CD4-positive, alpha-beta memory T cell (primary cell): ENCODE measurements at regions of chr1 and their contacts with region 1.

Region 1: GRCh38 chr1:232635778-232636356 is 5.9 kb upstream of the SIPA1L2 start:
- DNase-seq: peak in 4 of 5 donors; percentile 39 to 44 (median 42)
- H3K4me3 ChIP-seq: no peak overlapping the region
- H3K4me3 Mint-ChIP-seq: no peak overlapping the region
- H3K27ac ChIP-seq: no peak overlapping the region
- H3K27ac Mint-ChIP-seq: no peak overlapping the region
- H3K4me1 ChIP-seq: peaks cover 3% of the 10 kb centered on the region
- H3K4me1 Mint-ChIP-seq: peaks cover 1 to 4% (median 2%) of the 10 kb centered on the region in 4 donors
- H3K27me3 ChIP-seq: no peaks in the 10 kb centered on the region
- H3K27me3 Mint-ChIP-seq: peaks cover 11 to 13% of the 10 kb centered on the region in 2 donors

Region 2: DNA sequence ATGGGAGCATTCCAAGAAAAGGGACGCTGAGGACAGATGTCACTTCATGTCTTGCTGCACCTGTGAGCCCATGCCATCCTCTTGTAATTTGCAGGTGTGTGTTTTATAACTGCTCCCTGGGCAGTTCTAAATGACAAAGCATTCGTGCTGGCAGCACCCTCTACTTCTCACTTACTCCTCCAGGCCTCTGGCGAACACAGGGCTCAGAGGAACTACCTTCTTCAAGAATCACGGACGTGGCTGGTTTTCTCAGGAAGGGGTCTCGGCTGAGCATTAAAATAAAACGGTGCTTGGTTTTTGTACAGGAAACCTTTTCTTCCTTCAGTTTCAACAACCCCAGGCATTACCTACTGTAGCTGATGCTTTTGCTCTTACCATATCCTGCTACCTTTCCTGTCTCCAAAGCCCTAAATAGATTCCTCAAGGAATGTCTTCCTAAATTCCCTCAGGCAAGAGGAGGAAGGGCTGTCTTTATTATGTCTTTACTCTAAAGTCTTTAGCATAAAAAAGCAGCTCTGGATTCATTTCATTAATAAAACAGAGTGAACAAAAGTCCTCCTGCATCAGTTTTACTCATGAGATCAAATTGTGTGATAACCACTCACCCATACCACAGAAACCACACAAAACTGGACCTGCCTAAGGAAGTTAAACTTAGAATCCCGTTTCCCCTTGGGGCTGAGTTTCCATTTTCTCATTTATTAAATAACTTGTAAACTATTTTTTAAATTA is 90.3 kb after region 1 on chr1:
- CTCF ChIA-PET with region 1: no interaction called
- POLR2A ChIA-PET with region 1: no interaction called
- intact Hi-C with region 1: no loop called
- DNase-seq: no peak
- H3K4me3 ChIP-seq: no peak overlapping the region
- H3K4me3 Mint-ChIP-seq: peak overlapping the region in 2 of 8 donors; percentile 45 to 55
- H3K27ac ChIP-seq: no peak overlapping the region
- H3K27ac Mint-ChIP-seq: no peak overlapping the region
- H3K4me1 ChIP-seq: no peaks in the 10 kb centered on the region
- H3K4me1 Mint-ChIP-seq: peaks cover 6 to 10% (median 9%) of the 10 kb centered on the region in 4 donors
- H3K27me3 ChIP-seq: no peaks in the 10 kb centered on the region
- H3K27me3 Mint-ChIP-seq: peaks cover 7% of the 10 kb centered on the region in 2 donors

Region 3: GRCh38 chr1:232793944-232794343 is 158.1 kb after region 1 on chr1:
- CTCF ChIA-PET with region 1: interaction called, 5 read pairs
- POLR2A ChIA-PET with region 1: no interaction called
- intact Hi-C with region 1: loop called (anchors 1 kb)
- DNase-seq: peak in 1 of 5 donors; percentile 22
- H3K4me3 ChIP-seq: no peak overlapping the region
- H3K4me3 Mint-ChIP-seq: peak overlapping the region in 1 of 8 donors; percentile 27
- H3K27ac ChIP-seq: no peak overlapping the region
- H3K27ac Mint-ChIP-seq: peak overlapping the region in 2 of 7 donors; percentile 10 to 14
- H3K4me1 ChIP-seq: peaks cover 14% of the 10 kb centered on the region
- H3K4me1 Mint-ChIP-seq: peaks cover 7 to 11% (median 9%) of the 10 kb centered on the region in 4 donors
- H3K27me3 ChIP-seq: no peaks in the 10 kb centered on the region
- H3K27me3 Mint-ChIP-seq: peaks cover 3 to 6% of the 10 kb centered on the region in 2 donors

Region 4: DNA sequence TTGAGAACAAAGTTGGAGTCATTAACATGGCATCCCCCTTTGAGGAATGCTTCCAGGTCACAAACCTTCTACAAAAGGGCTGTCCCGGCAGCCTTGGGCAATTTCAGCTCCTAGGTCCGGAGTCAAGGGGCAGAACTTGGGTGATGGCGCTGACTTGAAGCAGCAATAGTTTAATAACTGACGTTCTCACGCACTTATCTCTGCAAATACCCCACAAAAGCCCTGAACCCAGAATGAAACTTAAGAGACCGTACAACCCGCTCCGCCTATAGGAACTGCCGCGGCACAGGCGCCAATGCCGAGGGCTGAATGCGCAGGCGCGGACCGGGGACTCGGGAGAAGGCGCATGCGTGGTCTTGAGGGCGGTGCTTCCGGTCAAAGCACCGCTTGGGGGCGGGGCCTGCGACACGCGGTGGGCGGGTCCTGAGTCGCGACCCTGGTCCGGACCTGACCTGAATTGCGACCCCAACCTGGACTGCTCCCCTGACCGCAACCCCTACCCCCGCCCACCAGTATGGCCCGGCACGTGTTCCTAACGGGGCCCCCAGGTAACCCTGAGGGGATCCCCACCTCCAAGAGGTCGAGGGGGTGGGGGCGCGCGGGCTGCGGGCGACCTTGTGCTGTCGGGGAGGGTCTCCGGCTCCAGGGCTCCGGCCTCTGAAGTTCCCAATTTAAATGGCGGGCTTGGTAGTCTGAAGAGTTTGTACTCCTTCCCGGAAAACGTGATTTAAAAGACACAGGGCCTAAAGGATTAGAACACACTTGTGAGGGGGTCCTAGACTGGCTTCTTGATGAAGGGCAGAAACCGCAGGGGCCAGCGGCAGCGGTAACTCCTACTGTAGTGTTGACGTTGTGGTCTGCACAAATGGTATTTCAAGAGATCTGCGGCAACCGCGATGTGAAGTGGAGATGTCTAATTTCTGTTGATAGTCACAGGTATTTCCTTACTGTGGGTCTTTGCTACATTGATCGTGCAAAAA is 314.6 kb after region 1 on chr1 and contains the start of gene NTPCR:
- CTCF ChIA-PET with region 1: interaction called, 3 read pairs
- POLR2A ChIA-PET with region 1: no interaction called
- intact Hi-C with region 1: loop called (anchors 1 kb)
- DNase-seq: peak; percentile 86 to 94 (median 91)
- H3K4me3 ChIP-seq: peak within 1 kb of the TSS; percentile 63 to 87
- H3K4me3 Mint-ChIP-seq: peak within 1 kb of the TSS; percentile 93 to 98 (median 97)
- H3K27ac ChIP-seq: peak within 1 kb of the TSS; percentile 58
- H3K27ac Mint-ChIP-seq: peak within 1 kb of the TSS; percentile 89 to 98 (median 97)
- H3K4me1 ChIP-seq: peaks cover 30% of the 10 kb centered on the region
- H3K4me1 Mint-ChIP-seq: peaks cover 24 to 48% (median 33%) of the 10 kb centered on the region in 4 donors
- H3K27me3 ChIP-seq: no peaks in the 10 kb centered on the region
- H3K27me3 Mint-ChIP-seq: no peaks in the 10 kb centered on the region
- total RNA-seq, gene NTPCR: 16.0 to 16.5 TPM

Region 5: DNA sequence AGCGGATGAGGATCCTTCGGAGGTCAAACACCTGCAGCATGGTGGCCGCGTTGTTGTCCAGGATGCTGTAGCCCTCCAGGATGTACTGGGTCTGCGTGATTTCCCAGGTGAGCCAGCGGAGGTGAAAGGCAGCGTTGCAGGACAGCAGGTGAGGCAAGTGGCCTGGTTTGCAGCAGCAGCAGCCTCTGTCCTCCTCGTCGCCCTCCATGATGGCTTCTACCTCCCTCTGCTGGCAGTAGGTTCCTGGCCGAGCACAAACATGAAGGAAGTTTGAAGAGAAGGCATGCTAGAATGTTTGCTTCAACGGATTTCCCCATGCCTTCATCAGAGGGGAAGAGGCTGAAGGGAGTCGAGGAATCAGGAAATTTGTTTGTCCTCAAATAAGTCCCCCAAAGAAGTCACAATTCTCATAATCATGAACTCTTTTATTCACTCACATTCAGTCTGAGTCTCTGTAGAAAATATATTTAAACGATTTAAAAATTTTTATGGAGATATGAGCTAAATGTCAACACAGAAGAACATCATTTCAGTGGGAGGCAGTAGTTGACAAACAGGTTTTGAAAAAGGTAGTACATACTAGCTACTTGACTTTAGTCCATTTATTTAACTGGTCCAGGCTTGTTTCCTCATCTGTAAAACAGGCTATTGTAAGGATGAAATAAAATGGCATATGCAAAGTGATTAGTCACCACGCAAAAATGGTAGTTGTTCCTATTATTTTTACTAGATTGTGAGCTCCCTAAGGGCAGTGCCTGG is 389.5 kb after region 1 on chr1:
- CTCF ChIA-PET with region 1: no interaction called
- POLR2A ChIA-PET with region 1: no interaction called
- intact Hi-C with region 1: loop called (anchors 5 kb)
- DNase-seq: no peak
- H3K4me3 ChIP-seq: no peak overlapping the region
- H3K4me3 Mint-ChIP-seq: no peak overlapping the region
- H3K27ac ChIP-seq: no peak overlapping the region
- H3K27ac Mint-ChIP-seq: no peak overlapping the region
- H3K4me1 ChIP-seq: no peaks in the 10 kb centered on the region
- H3K4me1 Mint-ChIP-seq: peaks cover 1 to 17% (median 10%) of the 10 kb centered on the region in 4 donors
- H3K27me3 ChIP-seq: no peaks in the 10 kb centered on the region
- H3K27me3 Mint-ChIP-seq: no peaks in the 10 kb centered on the region

Region 6: GRCh38 chr1:233240829-233241682 is 605.2 kb after region 1 on chr1:
- CTCF ChIA-PET with region 1: interaction called, 3 read pairs
- POLR2A ChIA-PET with region 1: no interaction called
- intact Hi-C with region 1: loop called (anchors 5 kb)
- DNase-seq: no peak
- H3K4me3 ChIP-seq: no peak overlapping the region
- H3K4me3 Mint-ChIP-seq: no peak overlapping the region
- H3K27ac ChIP-seq: no peak overlapping the region
- H3K27ac Mint-ChIP-seq: peak overlapping the region in 1 of 7 donors; percentile 34
- H3K4me1 ChIP-seq: no peaks in the 10 kb centered on the region
- H3K4me1 Mint-ChIP-seq: peaks cover 0 to 3% (median 0%) of the 10 kb centered on the region in 4 donors
- H3K27me3 ChIP-seq: no peaks in the 10 kb centered on the region
- H3K27me3 Mint-ChIP-seq: no peaks in the 10 kb centered on the region